PC-3 (cell line): ENCODE measurements at regions of chr9 and their contacts with region 1.

Region 1: DNA sequence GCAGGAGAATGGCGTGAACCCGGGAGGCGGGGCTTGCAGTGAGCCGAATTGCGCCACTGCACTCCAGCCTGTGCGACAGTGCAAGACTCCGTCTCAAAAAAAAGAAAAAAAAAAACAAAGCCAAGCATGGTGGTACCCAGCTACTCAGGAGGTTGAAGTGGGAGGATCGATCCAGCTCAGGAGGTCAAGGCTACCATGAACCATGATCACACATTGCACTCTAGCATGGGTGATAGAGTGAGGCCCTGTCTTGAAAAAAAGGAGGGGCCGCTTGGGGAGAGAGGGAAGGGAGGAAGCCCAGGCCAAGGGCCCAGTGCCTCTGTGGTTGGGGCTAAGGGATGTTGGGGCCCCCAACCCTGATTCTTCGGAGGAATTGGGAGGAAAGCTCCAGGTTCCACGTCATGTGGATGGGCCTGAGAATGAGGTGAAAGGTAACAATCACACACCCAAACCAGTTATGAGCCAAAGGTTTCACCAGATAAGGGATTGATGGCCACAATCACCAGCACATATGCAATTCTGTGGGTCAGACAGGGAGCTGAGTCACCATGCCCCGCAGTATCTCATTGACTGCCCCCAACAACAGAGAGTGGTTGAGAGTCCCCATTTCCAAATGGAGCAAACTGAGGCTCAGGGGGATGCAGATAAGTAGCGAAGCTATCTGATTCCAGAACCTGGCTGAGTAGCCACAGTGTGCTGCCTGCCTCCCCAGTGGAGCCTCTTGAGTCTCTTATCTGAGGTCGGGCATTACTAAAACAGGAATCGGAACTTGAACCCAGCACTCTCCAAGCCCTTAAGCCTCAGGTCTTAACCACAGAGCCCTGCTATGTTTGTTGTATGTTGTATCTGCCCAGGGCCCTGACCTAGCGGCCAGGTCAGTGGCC is 20.5 kb downstream of the SWI5 start:
- DNase-seq: no peak
- ATAC-seq: no peak
- H3K4me3 ChIP-seq: no peak overlapping the region
- H3K27ac ChIP-seq: no peak overlapping the region
- H3K4me1 ChIP-seq: peaks cover 14% of the 10 kb centered on the region
- H3K27me3 ChIP-seq: no peaks in the 10 kb centered on the region
- CTCF ChIP-seq: no peak

Region 2: DNA sequence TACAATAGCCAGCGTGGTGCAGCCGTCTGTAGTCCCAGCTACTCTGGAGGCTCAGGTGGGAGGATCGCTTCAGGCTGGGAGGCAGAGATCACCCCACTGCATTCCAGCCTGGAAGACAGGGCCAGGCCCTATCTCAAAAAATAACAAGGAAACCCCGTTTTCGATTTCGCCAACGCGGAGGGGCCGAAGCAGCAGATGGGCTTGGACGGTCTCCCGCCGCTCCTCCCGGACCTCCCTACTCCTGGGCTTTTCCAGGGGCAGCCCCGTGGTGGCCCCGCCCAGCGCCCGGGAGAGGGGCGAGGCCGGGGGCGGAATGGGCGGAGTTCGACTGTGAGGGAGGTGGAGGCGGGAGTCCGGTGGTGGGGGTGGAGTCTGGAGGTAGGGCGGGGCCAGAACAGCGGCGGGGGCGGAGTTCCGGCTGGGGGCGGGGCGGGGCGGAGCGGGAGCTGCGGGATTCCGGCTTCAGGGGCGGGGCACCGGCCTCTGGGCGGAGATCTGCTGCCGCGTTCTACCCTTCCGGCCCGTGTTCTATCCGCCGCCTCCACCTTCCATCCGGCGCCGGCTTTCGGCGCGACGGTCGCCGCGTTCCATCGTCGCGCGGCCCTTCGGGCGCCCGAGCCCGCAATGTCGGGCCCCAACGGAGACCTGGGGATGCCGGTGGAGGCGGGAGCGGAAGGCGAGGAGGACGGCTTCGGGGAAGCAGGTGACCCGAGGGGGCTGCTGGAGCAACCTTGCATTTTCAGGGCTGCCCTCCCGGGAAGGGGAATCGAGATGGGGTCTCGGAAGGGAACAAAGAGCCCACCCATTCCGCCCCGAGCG is 136.6 kb before region 1 on chr9 and contains the start of gene BBLN:
- CTCF ChIA-PET with region 1: no interaction called
- POLR2A ChIA-PET with region 1: no interaction called
- intact Hi-C with region 1: no loop called
- DNase-seq: peak; percentile 90
- ATAC-seq: peak; percentile 77
- H3K4me3 ChIP-seq: peak within 1 kb of the TSS; percentile 77
- H3K27ac ChIP-seq: peak within 1 kb of the TSS; percentile 63
- H3K4me1 ChIP-seq: peaks cover 19% of the 10 kb centered on the region
- H3K27me3 ChIP-seq: no peaks in the 10 kb centered on the region
- CTCF ChIP-seq: no peak
- total RNA-seq, gene BBLN: 158 and 171 TPM in 2 replicates

Region 3: GRCh38 chr9:128322404-128323211 is 26.0 kb after region 1 on chr9 and contains the starts of genes COQ4 and TRUB2:
- CTCF ChIA-PET with region 1: no interaction called
- POLR2A ChIA-PET with region 1: no interaction called
- intact Hi-C with region 1: loop called (anchors 2 kb)
- DNase-seq: peak; percentile 89
- ATAC-seq: peak; percentile 89
- H3K4me3 ChIP-seq: peak within 1 kb of the TSS; percentile 85
- H3K27ac ChIP-seq: peak within 1 kb of the TSS; percentile 86
- H3K4me1 ChIP-seq: peaks cover 6% of the 10 kb centered on the region; the same call in 1 of the 2 replicates
- H3K27me3 ChIP-seq: no peaks in the 10 kb centered on the region
- CTCF ChIP-seq: no peak
- total RNA-seq, gene COQ4: 28.1 and 31.3 TPM in 2 replicates
- total RNA-seq, gene TRUB2: 24.9 and 32.2 TPM in 2 replicates

Region 4: GRCh38 chr9:128339771-128340690 is 43.5 kb after region 1 on chr9 and contains the start of gene SLC27A4:
- CTCF ChIA-PET with region 1: interaction called, 20 read pairs
- POLR2A ChIA-PET with region 1: no interaction called
- intact Hi-C with region 1: loop called (anchors 1 kb)
- DNase-seq: peak; percentile 85
- ATAC-seq: peak; percentile 88
- H3K4me3 ChIP-seq: peak within 1 kb of the TSS; percentile 88
- H3K27ac ChIP-seq: peak within 1 kb of the TSS; percentile 36; the same call in 1 of the 2 replicates
- H3K4me1 ChIP-seq: no peaks in the 10 kb centered on the region
- H3K27me3 ChIP-seq: no peaks in the 10 kb centered on the region
- CTCF ChIP-seq: no peak
- total RNA-seq, gene SLC27A4: 39.1 and 41.1 TPM in 2 replicates

Region 5: GRCh38 chr9:128361986-128362646 is 65.5 kb after region 1 on chr9:
- CTCF ChIA-PET with region 1: interaction called, 8 read pairs
- POLR2A ChIA-PET with region 1: no interaction called
- intact Hi-C with region 1: loop called (anchors 5 kb)
- DNase-seq: peak; percentile 79
- ATAC-seq: peak; percentile 89
- H3K4me3 ChIP-seq: peak overlapping the region; percentile 64
- H3K27ac ChIP-seq: no peak overlapping the region
- H3K4me1 ChIP-seq: peaks cover 12% of the 10 kb centered on the region
- H3K27me3 ChIP-seq: no peaks in the 10 kb centered on the region
- CTCF ChIP-seq: peak; percentile 80